ENCODE measurements at regions of chr6 and their contacts with region 1.

Region 1: DNA sequence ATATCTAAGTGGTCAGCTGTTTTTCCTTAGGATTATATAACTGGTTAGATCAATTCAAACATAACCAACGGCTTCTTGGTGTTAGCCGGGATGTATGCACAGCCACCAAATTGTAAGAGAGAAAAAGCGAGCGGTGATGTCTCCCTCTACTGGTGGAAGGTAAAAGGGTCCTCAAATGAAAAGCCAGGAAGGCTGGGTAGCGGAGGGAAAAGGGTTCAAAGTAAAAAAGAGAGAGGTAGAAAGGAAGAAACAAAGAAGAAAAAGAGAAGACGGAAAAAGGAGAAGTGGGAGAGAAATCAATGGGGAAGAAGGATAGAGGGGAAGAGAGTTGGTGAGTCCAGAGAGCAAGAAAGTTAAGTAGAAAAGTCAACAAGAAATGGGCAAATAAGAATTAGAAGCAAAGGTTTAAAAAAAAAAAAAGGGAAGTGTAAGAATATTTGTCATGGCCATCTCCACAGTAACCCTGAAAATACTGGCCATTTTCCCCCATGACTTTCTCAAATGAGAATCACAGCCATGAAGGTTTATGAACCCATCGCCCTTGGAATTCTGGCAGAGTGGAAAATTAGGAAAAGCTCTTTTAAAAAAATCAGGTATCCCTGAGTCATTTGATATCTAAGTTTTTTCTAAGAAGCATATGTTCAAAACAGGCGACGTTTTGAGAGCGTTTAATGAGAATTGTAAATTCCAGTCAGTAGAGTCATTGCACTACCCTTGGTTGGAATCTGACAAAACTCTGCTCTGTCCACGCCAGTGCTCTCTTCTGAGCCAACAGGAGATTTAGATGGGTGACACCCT is 155.6 kb upstream of the SNX9 start:
- DNase-seq: peak; percentile 78
- H3K4me3 Mint-ChIP-seq: peak overlapping the region; percentile 28
- H3K27ac Mint-ChIP-seq: no peak overlapping the region
- H3K4me1 Mint-ChIP-seq: peaks cover 31% of the 10 kb centered on the region
- H3K27me3 Mint-ChIP-seq: peaks cover 4% of the 10 kb centered on the region

Region 2: DNA sequence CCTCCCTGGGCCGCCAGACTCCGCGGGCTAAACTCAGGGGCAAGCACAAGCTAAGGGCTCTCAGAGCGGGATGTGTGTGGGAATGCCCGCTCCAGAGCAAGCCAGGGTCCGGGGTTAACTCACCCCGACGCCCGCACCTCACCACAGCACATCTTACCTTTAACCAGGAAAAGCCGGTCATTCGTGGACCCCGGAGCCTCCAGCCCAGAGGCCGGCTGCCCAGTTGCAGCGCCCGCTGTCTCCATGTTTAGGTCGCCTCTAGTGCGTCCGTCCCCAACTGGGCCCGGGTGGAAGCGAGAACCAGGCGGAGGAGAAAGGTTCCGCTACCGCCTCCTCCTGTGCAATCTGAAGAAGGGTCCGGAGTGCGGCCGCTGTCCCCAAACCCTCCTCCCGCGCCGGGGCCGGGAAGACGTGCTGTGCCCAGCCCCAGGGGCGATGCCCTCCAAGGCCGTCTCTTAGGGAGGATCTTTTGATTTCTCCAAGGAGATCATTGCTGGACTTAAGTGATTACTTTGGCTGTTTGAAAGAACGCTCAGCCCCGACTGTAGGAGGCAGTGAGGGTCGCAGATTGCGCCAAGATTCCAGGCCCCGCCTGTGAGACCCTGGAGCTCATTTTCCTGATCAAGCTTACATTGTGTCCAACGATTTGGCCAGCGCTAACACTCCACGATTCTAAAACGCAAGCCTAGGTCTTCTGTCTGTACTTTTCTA is 344.0 kb before region 1 on chr6 and contains the start of gene TMEM242:
- CTCF ChIA-PET with region 1: interaction called, 8 read pairs
- intact Hi-C with region 1: loop called (anchors 2 kb)
- DNase-seq: peak; percentile 94
- H3K4me3 Mint-ChIP-seq: peak within 1 kb of the TSS; percentile 94
- H3K27ac Mint-ChIP-seq: peak within 1 kb of the TSS; percentile 80
- H3K4me1 Mint-ChIP-seq: peaks cover 20% of the 10 kb centered on the region
- H3K27me3 Mint-ChIP-seq: peaks cover 23% of the 10 kb centered on the region
- total RNA-seq, gene TMEM242: 9.3 to 10.3 TPM

Region 3: GRCh38 chr6:157368359-157369049 is 298.9 kb before region 1 on chr6:
- CTCF ChIA-PET with region 1: no interaction called
- intact Hi-C with region 1: no loop called
- DNase-seq: no peak
- H3K4me3 Mint-ChIP-seq: no peak overlapping the region
- H3K27ac Mint-ChIP-seq: no peak overlapping the region
- H3K4me1 Mint-ChIP-seq: peaks cover 20% of the 10 kb centered on the region
- H3K27me3 Mint-ChIP-seq: peaks cover 31% of the 10 kb centered on the region

Region 4: GRCh38 chr6:157428427-157429202 is 238.8 kb before region 1 on chr6:
- CTCF ChIA-PET with region 1: no interaction called
- intact Hi-C with region 1: loop called (anchors 1 kb)
- DNase-seq: peak; percentile 94
- H3K4me3 Mint-ChIP-seq: peak overlapping the region; percentile 43
- H3K27ac Mint-ChIP-seq: peak overlapping the region; percentile 90
- H3K4me1 Mint-ChIP-seq: peaks cover 43% of the 10 kb centered on the region
- H3K27me3 Mint-ChIP-seq: no peaks in the 10 kb centered on the region

Region 5: GRCh38 chr6:157518397-157519250 is 148.8 kb before region 1 on chr6:
- CTCF ChIA-PET with region 1: no interaction called
- intact Hi-C with region 1: no loop called
- DNase-seq: no peak
- H3K4me3 Mint-ChIP-seq: no peak overlapping the region
- H3K27ac Mint-ChIP-seq: no peak overlapping the region
- H3K4me1 Mint-ChIP-seq: peaks cover 1% of the 10 kb centered on the region
- H3K27me3 Mint-ChIP-seq: no peaks in the 10 kb centered on the region

Region 6: GRCh38 chr6:157614026-157614568 is 53.3 kb before region 1 on chr6:
- CTCF ChIA-PET with region 1: interaction called, 12 read pairs
- intact Hi-C with region 1: loop called (anchors 5 kb)
- DNase-seq: peak; percentile 22
- H3K4me3 Mint-ChIP-seq: no peak overlapping the region
- H3K27ac Mint-ChIP-seq: no peak overlapping the region
- H3K4me1 Mint-ChIP-seq: peaks cover 3% of the 10 kb centered on the region
- H3K27me3 Mint-ChIP-seq: no peaks in the 10 kb centered on the region

Region 7: DNA sequence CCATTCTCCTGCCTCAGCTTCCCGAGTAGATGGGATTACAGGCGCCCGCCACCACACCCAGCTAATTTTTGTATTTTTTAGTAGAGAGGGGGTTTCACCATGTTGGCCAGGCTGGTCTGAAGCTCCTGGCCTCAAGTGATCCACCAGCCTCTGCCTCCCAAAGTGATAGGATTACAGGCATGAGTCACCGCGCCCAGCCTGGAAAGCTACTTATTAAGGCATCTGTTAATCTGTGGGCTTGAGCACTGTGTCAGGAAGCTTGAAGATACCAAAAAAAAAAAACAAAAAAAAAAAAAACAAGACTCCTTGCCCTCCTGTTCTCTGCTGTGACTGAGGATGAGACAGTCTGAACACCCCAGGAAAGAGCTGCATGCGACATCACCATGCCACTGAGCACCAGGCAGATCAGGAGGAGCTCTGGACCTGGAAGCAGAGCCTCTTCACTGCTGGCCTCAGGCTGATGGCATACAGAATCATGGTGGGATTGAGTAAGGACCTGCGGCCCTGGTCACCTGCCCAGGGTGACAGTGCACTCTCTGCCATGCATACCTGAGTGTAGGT is 10.9 kb before region 1 on chr6:
- CTCF ChIA-PET with region 1: interaction called, 18 read pairs
- intact Hi-C with region 1: no loop called
- DNase-seq: no peak
- H3K4me3 Mint-ChIP-seq: no peak overlapping the region
- H3K27ac Mint-ChIP-seq: no peak overlapping the region
- H3K4me1 Mint-ChIP-seq: peaks cover 3% of the 10 kb centered on the region
- H3K27me3 Mint-ChIP-seq: no peaks in the 10 kb centered on the region

Region 8: GRCh38 chr6:157873735-157874344 is 206.4 kb after region 1 on chr6:
- CTCF ChIA-PET with region 1: interaction called, 8 read pairs
- intact Hi-C with region 1: loop called (anchors 1 kb)
- DNase-seq: peak; percentile 96
- H3K4me3 Mint-ChIP-seq: no peak overlapping the region
- H3K27ac Mint-ChIP-seq: peak overlapping the region; percentile 67
- H3K4me1 Mint-ChIP-seq: peaks cover 46% of the 10 kb centered on the region
- H3K27me3 Mint-ChIP-seq: no peaks in the 10 kb centered on the region

Region 9: DNA sequence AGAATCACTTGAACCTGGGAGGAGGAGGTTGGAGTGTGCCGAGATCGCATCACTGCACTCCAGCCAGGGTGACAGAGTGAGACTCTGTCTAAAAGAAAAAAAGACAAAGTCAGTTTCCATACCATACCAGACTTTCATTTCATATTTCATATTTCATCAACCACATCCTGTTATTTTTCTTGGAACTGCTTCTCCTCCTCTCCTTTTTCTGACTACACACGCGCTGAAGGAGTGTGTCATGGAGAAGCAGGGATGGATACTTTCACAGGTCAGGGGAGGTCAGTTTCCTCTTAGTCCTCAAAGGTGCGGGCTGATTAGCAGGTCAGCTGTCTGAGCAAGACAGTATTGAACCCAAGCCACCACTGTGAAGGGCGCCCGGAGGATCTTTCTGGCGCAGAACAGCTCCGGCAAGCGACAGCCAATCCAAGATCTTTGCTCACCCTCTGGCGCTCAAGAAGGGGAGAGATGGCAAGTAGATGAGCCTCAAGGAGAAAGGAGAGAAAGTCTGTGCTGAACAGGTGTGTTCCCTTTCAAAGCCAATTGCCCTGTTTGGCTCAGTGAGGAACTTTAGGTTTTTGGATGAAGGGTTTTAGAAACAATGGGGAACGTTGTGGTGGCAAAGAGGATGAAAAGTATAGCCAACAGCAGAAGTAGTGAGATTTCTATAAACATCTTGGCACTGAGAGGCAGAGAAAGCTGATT is 295.3 kb after region 1 on chr6:
- CTCF ChIA-PET with region 1: interaction called, 3 read pairs
- intact Hi-C with region 1: loop called (anchors 5 kb)
- DNase-seq: peak; percentile 55
- H3K4me3 Mint-ChIP-seq: peak overlapping the region; percentile 65
- H3K27ac Mint-ChIP-seq: peak overlapping the region; percentile 89
- H3K4me1 Mint-ChIP-seq: peaks cover 21% of the 10 kb centered on the region
- H3K27me3 Mint-ChIP-seq: no peaks in the 10 kb centered on the region

Measured in activated naive CD4-positive, alpha-beta T cell treated with anti-CD3 and anti-CD28 coated beads for 36 hours (primary cell).